ENCODE measurements at regions of chr20 and their contacts with region 1.

Region 1: GRCh38 chr20:242905-243304 is 14.6 kb upstream of the DEFB132 start:
- DNase-seq: no peak
- H3K4me3 ChIP-seq: no peak overlapping the region
- H3K27ac ChIP-seq: no peak overlapping the region
- H3K4me1 ChIP-seq: no peaks in the 10 kb centered on the region
- H3K27me3 ChIP-seq: no peaks in the 10 kb centered on the region
- CTCF ChIP-seq: no peak

Region 2: DNA sequence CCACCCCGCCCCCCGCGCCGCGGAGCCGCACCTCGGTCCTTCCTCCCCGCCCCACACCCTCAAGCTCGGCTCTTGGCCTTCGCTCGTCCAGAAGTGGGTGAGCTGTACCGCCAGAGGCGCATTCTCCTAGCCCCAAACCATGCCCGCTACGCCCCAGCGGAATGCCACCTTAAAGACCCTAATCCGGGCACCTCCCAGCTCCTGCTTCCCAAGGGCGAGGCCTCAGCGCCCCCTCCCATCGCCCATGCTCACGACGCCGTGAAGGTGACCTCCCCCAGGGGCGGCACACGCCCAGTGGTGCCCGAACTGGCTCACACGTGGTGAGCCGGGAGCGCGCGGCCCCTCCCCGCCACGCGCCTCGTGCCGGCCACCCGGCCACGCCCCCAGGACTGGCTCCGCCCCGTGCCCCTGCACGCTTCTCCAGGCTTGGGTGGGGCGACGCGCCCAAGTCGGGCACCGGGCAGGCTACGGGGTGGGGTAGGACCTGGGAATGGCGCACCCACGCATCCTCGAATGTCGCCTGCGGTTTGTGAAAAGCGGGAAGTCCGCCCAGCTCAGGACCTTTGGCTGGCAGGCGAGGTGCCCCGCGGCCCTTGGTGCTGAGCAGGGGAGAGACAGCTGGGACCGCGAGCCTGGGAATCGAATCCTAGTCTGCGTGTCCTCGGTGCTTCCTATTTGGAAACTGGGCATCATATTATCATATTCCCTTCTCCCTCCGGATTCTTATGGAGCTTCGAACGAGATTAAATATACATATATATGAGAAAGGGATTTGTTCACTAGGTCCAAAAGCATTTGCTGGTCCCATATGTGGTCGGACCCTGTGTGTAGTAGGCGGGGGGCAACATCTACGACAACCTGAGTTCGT is 81.5 kb after region 1 on chr20:
- dilution Hi-C with region 1: loop called (anchors 10 kb)
- DNase-seq: no peak
- H3K4me3 ChIP-seq: peak overlapping the region; percentile 45 to 94 (median 84)
- H3K27ac ChIP-seq: peak overlapping the region; percentile 91
- H3K4me1 ChIP-seq: peaks cover 24% of the 10 kb centered on the region
- H3K27me3 ChIP-seq: no peaks in the 10 kb centered on the region
- CTCF ChIP-seq: peak in 2 of 3 experiments; percentile 19 to 25

Region 3: DNA sequence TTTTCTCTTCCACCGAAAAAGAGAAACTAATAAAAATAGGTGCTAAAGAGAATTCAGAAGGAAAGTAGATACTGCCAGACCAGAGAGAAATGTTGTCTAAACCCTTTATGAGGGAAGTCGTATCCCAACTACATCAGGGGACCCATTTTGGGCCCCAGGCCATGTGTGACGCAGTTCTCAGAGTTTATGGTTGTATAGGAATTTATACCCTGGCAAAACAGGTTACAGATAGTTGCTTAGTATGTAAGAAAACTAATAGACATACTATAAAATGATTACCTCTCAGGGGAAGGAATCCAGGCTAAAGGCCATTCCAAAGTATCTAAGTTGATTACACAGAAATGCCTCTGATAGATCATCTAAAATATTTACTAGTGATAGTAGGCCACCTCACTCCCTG is 554.0 kb after region 1 on chr20:
- dilution Hi-C with region 1: no loop called
- DNase-seq: no peak
- H3K4me3 ChIP-seq: no peak overlapping the region
- H3K27ac ChIP-seq: no peak overlapping the region
- H3K4me1 ChIP-seq: no peaks in the 10 kb centered on the region
- H3K27me3 ChIP-seq: no peaks in the 10 kb centered on the region
- CTCF ChIP-seq: no peak

Measured in keratinocyte (primary cell).